Aorta (tissue), 5 donors: ENCODE measurements at regions of chr2 and their contacts with region 1.

Region 1: DNA sequence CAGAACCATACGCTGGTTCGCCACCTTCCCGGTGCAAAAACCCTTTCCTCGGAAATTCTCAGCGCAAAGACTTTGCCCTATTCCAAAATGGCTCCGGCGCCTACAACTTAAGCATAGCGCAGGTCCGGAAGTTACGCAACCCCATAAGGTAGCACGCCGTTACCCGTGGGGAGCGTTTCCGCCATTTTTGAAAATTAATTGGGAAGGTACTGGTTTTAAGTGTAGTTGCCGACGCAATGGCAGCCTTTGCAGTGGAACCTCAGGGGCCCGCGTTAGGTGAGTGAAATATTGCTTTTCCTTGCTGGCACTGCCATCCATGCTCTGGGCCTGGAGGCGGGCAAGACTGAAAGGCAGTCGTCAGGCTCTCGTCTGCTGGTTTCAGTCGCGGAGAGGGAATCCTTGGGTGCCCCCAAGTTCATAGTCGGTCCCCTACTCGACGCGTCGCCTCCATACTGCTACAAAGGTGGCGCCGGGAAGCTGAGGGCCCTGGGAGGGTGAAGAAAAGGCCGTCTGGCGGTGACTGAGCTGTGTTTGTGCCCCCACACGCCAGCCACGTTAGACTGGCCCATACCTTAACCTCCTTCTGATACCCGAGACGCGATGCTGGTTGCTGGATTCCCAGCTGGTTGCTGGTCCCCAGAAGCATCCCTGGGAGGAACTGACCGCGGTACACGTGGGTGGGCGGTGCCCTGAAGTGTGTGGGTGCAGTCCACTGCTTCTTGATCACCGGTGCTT is at the start of gene NUP35:
- DNase-seq: peak; percentile 90
- ATAC-seq: peak; percentile 97
- H3K4me3 ChIP-seq: peak within 1 kb of the TSS; percentile 56 to 80
- H3K27ac ChIP-seq: peak within 1 kb of the TSS; percentile 4 to 56
- H3K4me1 ChIP-seq: no peaks in the 10 kb centered on the region
- H3K27me3 ChIP-seq: no peaks in the 10 kb centered on the region
- total RNA-seq, gene NUP35: 14.1 to 17.0 TPM

Region 2: DNA sequence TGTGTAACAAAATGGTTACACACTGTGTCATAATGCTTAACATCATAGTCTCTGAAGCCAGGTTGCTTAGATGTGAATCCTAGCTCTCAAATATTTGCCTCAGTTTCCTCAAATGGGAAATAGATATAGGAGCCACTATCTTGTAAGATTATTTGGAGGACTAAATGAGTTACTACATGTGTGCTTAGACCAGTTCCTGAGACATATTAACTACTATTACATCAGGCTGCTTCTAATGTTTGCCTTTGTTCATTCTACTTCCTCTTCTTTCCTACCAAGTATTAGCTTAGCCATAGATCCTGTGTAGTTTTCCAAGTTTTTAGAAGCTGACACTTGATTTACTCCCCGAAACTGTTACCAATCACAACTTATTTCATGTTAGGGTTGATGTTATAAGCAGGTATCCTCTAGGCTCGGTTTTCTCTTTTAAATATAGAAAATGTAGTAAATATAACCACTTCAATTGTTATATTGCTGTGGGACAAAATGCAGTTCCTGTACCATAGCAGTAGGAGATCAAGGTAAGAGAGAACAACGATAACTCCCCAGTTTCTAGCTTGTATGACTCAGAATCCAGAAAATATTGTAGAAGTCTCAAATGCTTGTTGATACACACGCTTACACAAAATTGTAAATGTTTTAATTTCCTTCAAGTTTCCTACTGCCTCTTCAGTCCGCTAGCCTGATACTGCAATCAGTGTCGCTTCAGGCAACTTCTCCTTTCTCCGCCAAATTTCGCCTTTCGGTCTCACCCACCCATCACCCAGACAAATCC is 409.1 kb before region 1 on chr2:
- intact Hi-C with region 1: no loop called
- DNase-seq: no peak
- ATAC-seq: no peak
- H3K4me3 ChIP-seq: peak overlapping the region; percentile 19 to 72
- H3K27ac ChIP-seq: peak overlapping the region; percentile 12 to 84
- H3K4me1 ChIP-seq: peaks cover 0 to 5% of the 10 kb centered on the region in 2 donors
- H3K27me3 ChIP-seq: no peaks in the 10 kb centered on the region

Region 3: DNA sequence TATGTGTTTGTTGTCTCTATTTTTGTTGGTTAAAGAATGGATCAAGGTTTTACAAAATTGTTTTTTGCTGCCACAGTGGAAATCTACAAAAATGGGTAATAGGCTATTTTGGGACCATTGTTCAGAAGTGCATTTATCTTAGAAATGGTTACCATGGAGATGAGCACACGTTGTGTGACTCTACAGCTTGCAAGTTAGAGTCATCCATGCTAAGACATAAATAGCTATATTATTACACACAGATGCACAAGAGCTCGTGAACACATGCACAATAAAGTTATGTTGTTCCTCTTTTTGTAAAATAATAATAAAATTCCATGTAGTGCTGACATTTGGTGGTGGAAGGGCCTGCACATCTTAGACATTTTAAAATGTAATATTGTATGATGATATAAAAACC is 61.3 kb before region 1 on chr2:
- intact Hi-C with region 1: no loop called
- DNase-seq: no peak
- ATAC-seq: no peak
- H3K4me3 ChIP-seq: no peak overlapping the region
- H3K27ac ChIP-seq: no peak overlapping the region
- H3K4me1 ChIP-seq: peaks cover 0 to 1% of the 10 kb centered on the region in 2 donors
- H3K27me3 ChIP-seq: no peaks in the 10 kb centered on the region

Region 4: GRCh38 chr2:183089192-183089851 is 35.1 kb before region 1 on chr2:
- intact Hi-C with region 1: loop called in 1 of 2 experiments (anchors 5 kb)
- DNase-seq: no peak
- ATAC-seq: no peak
- H3K4me3 ChIP-seq: no peak overlapping the region
- H3K27ac ChIP-seq: peak overlapping the region in 1 of 2 donors; percentile 40
- H3K4me1 ChIP-seq: peaks cover under 1 to 2% of the 10 kb centered on the region in 2 donors
- H3K27me3 ChIP-seq: no peaks in the 10 kb centered on the region

Region 5: GRCh38 chr2:183214680-183215079 is 90.3 kb after region 1 on chr2:
- intact Hi-C with region 1: no loop called
- DNase-seq: no peak
- ATAC-seq: no peak
- H3K4me3 ChIP-seq: no peak overlapping the region
- H3K27ac ChIP-seq: no peak overlapping the region
- H3K4me1 ChIP-seq: no peaks in the 10 kb centered on the region
- H3K27me3 ChIP-seq: no peaks in the 10 kb centered on the region